ENCODE measurements at regions of chr11 and their contacts with region 1.

Region 1: GRCh38 chr11:62169935-62170548 is 20.0 kb upstream of the SCGB1D1 start:
- DNase-seq: no peak
- H3K4me3 ChIP-seq: no peak overlapping the region
- H3K27ac ChIP-seq: peak overlapping the region; percentile 51
- H3K4me1 ChIP-seq: peaks cover 18% of the 10 kb centered on the region
- H3K27me3 ChIP-seq: peaks cover 58% of the 10 kb centered on the region
- CTCF ChIP-seq: no peak

Region 2: DNA sequence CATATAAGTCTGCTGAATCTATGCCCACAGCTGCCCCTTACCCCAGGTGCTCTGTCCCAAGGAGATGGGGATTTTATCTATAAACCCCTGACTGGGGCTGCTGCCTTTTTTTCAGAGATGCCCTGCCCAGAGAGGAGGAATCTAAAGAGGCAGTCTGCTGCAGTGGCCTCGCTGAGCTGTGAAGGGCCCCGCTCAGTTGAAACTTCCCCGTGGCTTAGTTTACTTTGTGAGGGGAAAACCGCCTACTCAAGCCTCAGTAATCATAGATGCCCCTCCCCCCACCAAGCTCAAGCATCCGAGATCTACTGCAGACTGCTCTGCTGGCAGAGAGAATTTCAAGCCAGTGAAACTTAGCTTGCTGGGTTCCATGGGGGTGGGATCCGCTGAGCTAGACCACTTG is 136.2 kb after region 1 on chr11:
- intact Hi-C with region 1: loop called (anchors 10 kb)
- DNase-seq: no peak
- H3K4me3 ChIP-seq: no peak overlapping the region
- H3K27ac ChIP-seq: no peak overlapping the region
- H3K4me1 ChIP-seq: no peaks in the 10 kb centered on the region
- H3K27me3 ChIP-seq: peaks cover 53% of the 10 kb centered on the region
- CTCF ChIP-seq: no peak

Region 3: GRCh38 chr11:62472012-62472884 is 302.2 kb after region 1 on chr11:
- intact Hi-C with region 1: no loop called
- DNase-seq: no peak
- H3K4me3 ChIP-seq: no peak overlapping the region
- H3K27ac ChIP-seq: no peak overlapping the region
- H3K4me1 ChIP-seq: no peaks in the 10 kb centered on the region
- H3K27me3 ChIP-seq: no peaks in the 10 kb centered on the region
- CTCF ChIP-seq: no peak

Measured in left ventricle myocardium inferior (tissue), 1 donor.